CD8-positive, alpha-beta T cell (primary cell): ENCODE measurements at regions of chr1 and their contacts with region 1.

Region 1: DNA sequence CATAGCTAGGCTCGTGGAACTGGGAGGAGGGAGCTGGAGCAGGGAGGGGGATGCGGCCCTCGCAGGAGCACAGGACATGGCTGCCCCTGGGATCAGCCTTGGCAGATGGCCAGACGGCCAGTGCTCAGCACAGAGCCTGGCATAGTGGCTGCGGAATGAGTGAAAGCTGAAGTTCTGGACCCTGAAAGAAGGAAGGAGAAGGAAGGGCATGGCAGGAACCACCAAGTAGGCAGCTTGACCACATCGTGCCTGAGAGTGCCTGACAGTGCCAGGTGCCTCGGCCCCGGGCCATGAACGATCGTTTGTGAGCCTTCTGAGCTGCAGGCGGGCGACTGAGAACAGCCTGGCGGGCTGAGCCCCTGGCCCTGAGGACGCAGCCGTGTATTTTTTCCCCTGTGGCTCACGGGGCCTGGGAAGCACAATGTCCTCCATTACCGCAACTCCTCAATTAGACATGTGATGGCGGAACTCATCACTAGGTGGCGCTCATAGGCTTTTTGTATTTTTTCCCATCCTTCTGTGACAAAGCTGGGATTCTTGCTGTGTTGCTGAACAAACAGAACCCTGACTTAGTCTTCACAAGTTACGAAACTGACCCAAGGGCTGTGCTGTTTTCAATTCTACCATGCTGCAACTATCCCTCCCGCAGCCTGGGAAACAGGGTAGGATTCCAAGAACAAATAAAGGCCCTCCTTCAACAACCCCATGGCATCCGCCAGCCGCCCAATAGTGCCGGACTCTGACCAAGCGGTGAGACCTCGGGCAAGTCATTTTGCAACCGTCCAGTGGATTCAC is 29.9 kb upstream of the TMEM61 start:
- DNase-seq: peak in 8 of 9 experiments; percentile 14 to 69 (median 43)
- ATAC-seq: peak; percentile 49
- H3K4me3 ChIP-seq: no peak overlapping the region
- H3K4me3 Mint-ChIP-seq: no peak overlapping the region
- H3K27ac ChIP-seq: no peak overlapping the region
- H3K27ac Mint-ChIP-seq: no peak overlapping the region
- H3K4me1 ChIP-seq: peaks cover 4% of the 10 kb centered on the region
- H3K4me1 Mint-ChIP-seq: peaks cover 3% of the 10 kb centered on the region
- H3K27me3 ChIP-seq: no peaks in the 10 kb centered on the region
- H3K27me3 Mint-ChIP-seq: peaks cover 2% of the 10 kb centered on the region
- CTCF ChIP-seq: peak; percentile 50

Region 2: DNA sequence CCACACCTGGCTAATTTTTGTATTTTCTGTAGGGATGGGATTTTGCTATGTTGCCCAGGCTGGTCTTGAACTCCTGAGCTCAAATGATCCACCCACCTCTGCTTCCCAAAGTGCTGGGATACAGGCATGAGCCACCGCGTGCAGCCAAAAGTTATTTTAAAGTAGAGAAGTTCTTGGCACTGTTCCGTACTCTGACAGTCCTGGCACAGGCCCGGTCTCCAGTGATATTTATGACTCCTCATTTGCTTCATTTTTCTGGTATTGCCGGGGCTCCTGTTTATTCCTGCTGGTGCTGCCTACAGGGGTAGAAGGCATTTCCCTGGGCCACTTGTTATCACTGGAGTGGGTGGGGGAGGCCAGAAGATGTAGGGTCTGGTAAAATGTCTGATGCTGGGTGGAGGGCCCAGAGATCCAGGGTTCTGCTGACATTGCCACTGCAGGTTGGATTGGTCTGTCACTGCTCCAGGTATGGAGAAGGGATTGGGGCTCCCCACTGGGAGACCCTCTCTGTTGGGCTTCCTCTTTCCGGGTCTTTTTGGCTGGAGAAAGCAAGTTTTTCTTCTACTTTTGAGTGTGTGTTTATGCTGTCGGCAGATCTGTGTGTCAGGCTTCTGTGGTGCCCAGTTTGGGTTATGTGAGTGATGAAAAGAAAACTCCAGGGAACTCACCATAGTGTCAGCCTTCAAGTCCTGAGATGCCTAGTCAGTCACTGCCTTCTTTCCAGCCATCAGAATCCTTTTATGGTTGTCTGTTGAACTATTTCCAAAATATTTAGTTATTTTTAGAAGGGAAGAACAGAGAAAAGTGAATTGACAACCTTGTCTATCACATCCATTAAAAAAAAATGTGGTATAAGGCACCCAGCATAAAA is 304.5 kb before region 1 on chr1:
- CTCF ChIA-PET with region 1: no interaction called
- POLR2A ChIA-PET with region 1: no interaction called
- intact Hi-C with region 1: no loop called
- DNase-seq: no peak
- ATAC-seq: no peak
- H3K4me3 ChIP-seq: no peak overlapping the region
- H3K4me3 Mint-ChIP-seq: no peak overlapping the region
- H3K27ac ChIP-seq: no peak overlapping the region
- H3K27ac Mint-ChIP-seq: no peak overlapping the region
- H3K4me1 ChIP-seq: no peaks in the 10 kb centered on the region
- H3K4me1 Mint-ChIP-seq: no peaks in the 10 kb centered on the region
- H3K27me3 ChIP-seq: no peaks in the 10 kb centered on the region
- H3K27me3 Mint-ChIP-seq: peaks cover 10% of the 10 kb centered on the region
- CTCF ChIP-seq: no peak

Region 3: GRCh38 chr1:54833121-54833520 is 117.4 kb before region 1 on chr1:
- CTCF ChIA-PET with region 1: no interaction called
- POLR2A ChIA-PET with region 1: no interaction called
- intact Hi-C with region 1: no loop called
- DNase-seq: peak in 1 of 9 experiments; percentile 17
- ATAC-seq: no peak
- H3K4me3 ChIP-seq: no peak overlapping the region
- H3K4me3 Mint-ChIP-seq: no peak overlapping the region
- H3K27ac ChIP-seq: no peak overlapping the region
- H3K27ac Mint-ChIP-seq: no peak overlapping the region
- H3K4me1 ChIP-seq: no peaks in the 10 kb centered on the region
- H3K4me1 Mint-ChIP-seq: no peaks in the 10 kb centered on the region
- H3K27me3 ChIP-seq: no peaks in the 10 kb centered on the region
- H3K27me3 Mint-ChIP-seq: peaks cover 4% of the 10 kb centered on the region
- CTCF ChIP-seq: no peak

Region 4: GRCh38 chr1:54996359-54996868 is 45.8 kb after region 1 on chr1:
- CTCF ChIA-PET with region 1: interaction called, 67 read pairs
- POLR2A ChIA-PET with region 1: interaction called, 7 read pairs
- intact Hi-C with region 1: loop called (anchors 1 kb)
- DNase-seq: peak; percentile 58 to 85 (median 76)
- ATAC-seq: peak; percentile 73
- H3K4me3 ChIP-seq: peak overlapping the region; percentile 12 to 13
- H3K4me3 Mint-ChIP-seq: peak overlapping the region; percentile 59
- H3K27ac ChIP-seq: peak overlapping the region in 1 of 2 experiments; percentile 25
- H3K27ac Mint-ChIP-seq: peak overlapping the region; percentile 35
- H3K4me1 ChIP-seq: peaks cover 20% of the 10 kb centered on the region
- H3K4me1 Mint-ChIP-seq: peaks cover 24% of the 10 kb centered on the region
- H3K27me3 ChIP-seq: peaks cover 6 to 21% of the 10 kb centered on the region in 2 experiments
- H3K27me3 Mint-ChIP-seq: peaks cover 43% of the 10 kb centered on the region
- CTCF ChIP-seq: peak; percentile 55

Region 5: DNA sequence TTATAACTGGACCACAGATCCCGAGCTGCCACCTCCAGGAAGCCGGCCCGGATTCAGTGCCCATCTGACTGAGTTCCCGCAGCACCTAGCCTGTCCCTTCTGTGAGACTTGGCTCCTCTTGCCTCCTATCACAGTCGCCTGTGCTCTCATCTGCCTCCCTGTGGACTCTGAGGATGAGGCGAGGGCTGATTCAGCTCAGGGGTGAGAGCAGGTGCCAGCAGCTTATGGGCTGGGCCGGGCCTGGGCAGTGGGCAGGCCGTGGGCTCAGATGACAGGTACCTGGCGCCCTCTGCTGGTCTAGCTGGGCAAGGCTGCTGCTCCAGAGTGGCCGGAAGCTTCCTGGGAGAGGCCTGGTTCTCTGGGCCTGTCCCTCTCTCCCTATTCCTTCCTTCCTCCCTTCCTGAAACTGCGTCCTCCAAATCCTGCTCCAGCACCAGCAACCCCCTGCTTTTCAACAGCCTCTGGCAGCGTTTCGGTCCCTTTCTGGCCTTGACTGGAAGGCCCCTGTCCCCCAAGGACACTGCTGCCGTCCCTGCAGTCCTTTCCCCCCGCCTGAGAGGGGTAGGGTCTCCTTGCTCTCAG is 71.5 kb after region 1 on chr1:
- CTCF ChIA-PET with region 1: interaction called, 16 read pairs
- POLR2A ChIA-PET with region 1: no interaction called
- intact Hi-C with region 1: loop called in 1 of 2 experiments (anchors 2 kb)
- DNase-seq: peak; percentile 25 to 73 (median 55)
- ATAC-seq: peak; percentile 68
- H3K4me3 ChIP-seq: no peak overlapping the region
- H3K4me3 Mint-ChIP-seq: no peak overlapping the region
- H3K27ac ChIP-seq: no peak overlapping the region
- H3K27ac Mint-ChIP-seq: no peak overlapping the region
- H3K4me1 ChIP-seq: no peaks in the 10 kb centered on the region
- H3K4me1 Mint-ChIP-seq: no peaks in the 10 kb centered on the region
- H3K27me3 ChIP-seq: no peaks in the 10 kb centered on the region
- H3K27me3 Mint-ChIP-seq: peaks cover 12% of the 10 kb centered on the region
- CTCF ChIP-seq: peak; percentile 61

Region 6: GRCh38 chr1:55064071-55064581 is 113.6 kb after region 1 on chr1:
- CTCF ChIA-PET with region 1: no interaction called
- POLR2A ChIA-PET with region 1: no interaction called
- intact Hi-C with region 1: no loop called
- DNase-seq: no peak
- ATAC-seq: no peak
- H3K4me3 ChIP-seq: no peak overlapping the region
- H3K4me3 Mint-ChIP-seq: no peak overlapping the region
- H3K27ac ChIP-seq: no peak overlapping the region
- H3K27ac Mint-ChIP-seq: no peak overlapping the region
- H3K4me1 ChIP-seq: no peaks in the 10 kb centered on the region
- H3K4me1 Mint-ChIP-seq: no peaks in the 10 kb centered on the region
- H3K27me3 ChIP-seq: no peaks in the 10 kb centered on the region
- H3K27me3 Mint-ChIP-seq: no peaks in the 10 kb centered on the region
- CTCF ChIP-seq: no peak

Region 7: DNA sequence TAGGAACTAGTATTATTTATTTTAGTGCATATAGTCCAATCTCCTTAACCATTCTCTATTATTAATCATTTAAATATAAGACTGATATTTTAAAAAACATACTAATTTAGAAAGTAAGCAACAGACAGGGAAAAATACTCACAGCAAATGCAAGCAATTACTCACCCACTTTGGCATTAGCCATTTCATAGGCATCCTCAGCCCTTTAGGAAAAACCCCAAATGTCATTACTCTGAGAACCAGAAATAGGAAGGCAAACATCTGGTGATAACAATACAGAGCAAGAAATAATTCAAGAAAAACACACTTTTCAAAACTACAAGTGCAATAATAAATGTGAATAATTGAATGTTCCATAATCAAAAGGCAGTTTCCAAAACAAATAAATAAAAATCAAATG is 1083.7 kb after region 1 on chr1:
- CTCF ChIA-PET with region 1: no interaction called
- POLR2A ChIA-PET with region 1: no interaction called
- intact Hi-C with region 1: no loop called
- DNase-seq: no peak
- ATAC-seq: no peak
- H3K4me3 ChIP-seq: no peak overlapping the region
- H3K4me3 Mint-ChIP-seq: no peak overlapping the region
- H3K27ac ChIP-seq: no peak overlapping the region
- H3K27ac Mint-ChIP-seq: no peak overlapping the region
- H3K4me1 ChIP-seq: no peaks in the 10 kb centered on the region
- H3K4me1 Mint-ChIP-seq: no peaks in the 10 kb centered on the region
- H3K27me3 ChIP-seq: no peaks in the 10 kb centered on the region
- H3K27me3 Mint-ChIP-seq: no peaks in the 10 kb centered on the region
- CTCF ChIP-seq: no peak